Activated T-helper 1 cell treated with anti-CD3 and anti-CD28 coated beads, Interleukin-12 subunit alpha, Interleukin-12 subunit beta, Interleukin-2, Interleukin-4 antibody, amounts not matched to agents 30 ng/mL and 10 ng/mL and 1 ng/mL, durations not matched to agents 14 hours and 24 hours and 36 hours (primary cell): ENCODE measurements at regions of chr14 and their contacts with region 1.

Region 1: GRCh38 chr14:67359775-67360648 is at the starts of genes ATP6V1D and EIF2S1:
- DNase-seq: peak; percentile 100
- H3K4me3 Mint-ChIP-seq: peak within 1 kb of the TSS; percentile 92
- H3K27ac Mint-ChIP-seq: peak within 1 kb of the TSS; percentile 97
- H3K4me1 Mint-ChIP-seq: peaks cover 81% of the 10 kb centered on the region
- H3K27me3 Mint-ChIP-seq: no peaks in the 10 kb centered on the region
- total RNA-seq, gene ATP6V1D: 29.1 and 30.8 TPM in 2 replicates
- total RNA-seq, gene EIF2S1: 234 and 245 TPM in 2 replicates

Region 2: DNA sequence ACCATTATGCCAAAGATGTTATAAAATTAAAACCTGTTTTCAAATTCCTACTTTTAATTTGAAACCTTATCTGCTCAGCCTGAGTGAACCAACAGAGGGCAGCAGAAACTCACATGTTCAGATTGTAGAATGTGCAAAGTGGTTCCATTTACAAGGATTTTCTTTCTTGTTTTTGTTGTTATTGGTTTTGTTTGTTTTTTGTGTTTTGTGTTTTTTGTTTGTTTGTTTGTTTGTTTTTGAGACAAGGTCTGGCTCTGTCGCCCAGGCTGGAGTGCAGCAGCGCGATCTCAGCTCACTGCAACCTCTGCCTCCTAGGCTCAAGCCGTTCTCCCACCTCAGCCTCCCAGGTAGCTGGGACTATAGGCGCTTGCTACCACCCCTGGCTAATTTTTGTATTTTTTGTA is 193.6 kb before region 1 on chr14:
- intact Hi-C with region 1: loop called (anchors 2 kb)
- DNase-seq: no peak
- H3K4me3 Mint-ChIP-seq: no peak overlapping the region
- H3K27ac Mint-ChIP-seq: no peak overlapping the region
- H3K4me1 Mint-ChIP-seq: peaks cover 7% of the 10 kb centered on the region
- H3K27me3 Mint-ChIP-seq: no peaks in the 10 kb centered on the region

Region 3: DNA sequence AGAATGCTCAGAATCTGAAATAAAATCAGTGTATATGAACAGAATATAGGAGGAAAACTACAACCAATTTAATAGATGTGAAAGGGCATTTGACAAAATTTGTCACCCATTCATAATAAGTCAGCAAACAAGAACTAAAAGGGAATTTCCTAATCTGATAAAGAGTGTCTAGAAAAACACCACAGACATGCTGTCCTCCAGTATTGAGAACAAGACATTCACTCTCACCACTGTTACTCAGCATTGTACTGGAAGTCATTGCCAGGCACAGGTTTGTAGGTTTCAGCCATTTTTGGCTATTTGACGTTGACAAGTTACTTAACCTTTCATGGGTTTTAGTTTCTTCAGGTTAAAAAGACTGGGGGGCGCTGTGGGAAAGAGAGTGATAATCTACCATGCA is 13.3 kb after region 1 on chr14:
- intact Hi-C with region 1: loop called (anchors 1 kb)
- DNase-seq: no peak
- H3K4me3 Mint-ChIP-seq: no peak overlapping the region
- H3K27ac Mint-ChIP-seq: peak overlapping the region; percentile 14
- H3K4me1 Mint-ChIP-seq: peaks cover 40% of the 10 kb centered on the region
- H3K27me3 Mint-ChIP-seq: no peaks in the 10 kb centered on the region

Region 4: DNA sequence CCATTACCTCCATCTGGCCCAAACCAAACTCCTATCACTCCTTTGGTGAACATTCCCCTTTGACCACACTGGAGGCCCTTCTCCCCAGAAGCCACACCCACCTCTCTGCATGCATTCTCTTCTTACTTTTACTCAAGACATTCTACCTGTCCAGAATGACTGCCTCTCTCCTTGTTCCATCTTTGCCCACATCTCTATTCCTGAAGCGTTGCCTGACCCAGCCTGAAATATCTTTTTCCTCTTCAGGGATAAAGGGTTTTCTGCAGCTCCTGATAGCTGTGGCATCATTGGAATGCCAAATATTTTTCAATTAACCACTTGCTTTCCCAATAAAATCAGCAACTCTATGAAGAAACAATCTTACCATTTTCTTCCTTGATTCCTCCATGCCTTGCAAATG is 36.5 kb after region 1 on chr14:
- intact Hi-C with region 1: no loop called
- DNase-seq: no peak
- H3K4me3 Mint-ChIP-seq: no peak overlapping the region
- H3K27ac Mint-ChIP-seq: no peak overlapping the region
- H3K4me1 Mint-ChIP-seq: peaks cover under 1% of the 10 kb centered on the region
- H3K27me3 Mint-ChIP-seq: peaks cover 14% of the 10 kb centered on the region

Region 5: DNA sequence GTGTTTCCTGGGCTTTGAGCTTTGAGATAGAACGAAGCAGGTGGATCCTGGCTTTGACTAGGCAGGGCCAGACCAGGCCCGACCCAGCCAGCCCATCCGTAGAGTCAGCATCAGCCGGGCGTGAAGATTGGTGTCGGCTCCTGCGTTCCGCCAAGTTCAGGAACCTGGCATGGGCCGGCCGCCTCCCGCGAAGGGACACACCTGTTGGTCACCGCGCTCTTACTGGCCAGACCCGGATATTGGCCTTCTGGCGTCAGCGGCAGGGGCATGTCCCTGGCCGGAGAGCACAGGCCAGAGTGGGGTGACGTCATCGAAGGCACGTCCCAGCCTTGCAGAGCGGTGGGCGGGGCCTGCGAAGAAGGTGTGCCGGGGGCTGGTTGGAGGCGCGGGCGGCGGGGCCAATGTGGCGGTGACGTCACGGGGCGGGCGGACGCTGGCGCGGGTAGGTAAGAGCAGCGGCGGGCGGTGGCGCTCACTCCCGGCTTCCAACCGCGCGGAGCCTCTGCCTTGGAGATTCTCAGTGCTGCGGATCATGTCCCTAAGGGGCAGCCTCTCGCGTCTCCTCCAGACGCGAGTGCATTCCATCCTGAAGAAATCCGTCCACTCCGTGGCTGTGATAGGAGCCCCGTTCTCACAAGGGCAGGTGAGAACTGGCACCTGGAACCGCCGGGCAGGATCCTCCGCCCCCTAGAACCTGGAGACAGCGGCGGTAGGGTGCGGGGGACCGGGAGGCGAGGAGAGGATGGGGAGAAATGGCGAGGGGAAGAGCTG is 259.6 kb after region 1 on chr14 and contains the start of gene ARG2:
- intact Hi-C with region 1: loop called (anchors 1 kb)
- DNase-seq: peak; percentile 94
- H3K4me3 Mint-ChIP-seq: peak within 1 kb of the TSS; percentile 86
- H3K27ac Mint-ChIP-seq: peak within 1 kb of the TSS; percentile 71
- H3K4me1 Mint-ChIP-seq: peaks cover 39% of the 10 kb centered on the region
- H3K27me3 Mint-ChIP-seq: peaks cover 14% of the 10 kb centered on the region
- total RNA-seq, gene ARG2: 5.2 and 7.1 TPM in 2 replicates